ENCODE measurements at regions of chr2 and their contacts with region 1.

Region 1: DNA sequence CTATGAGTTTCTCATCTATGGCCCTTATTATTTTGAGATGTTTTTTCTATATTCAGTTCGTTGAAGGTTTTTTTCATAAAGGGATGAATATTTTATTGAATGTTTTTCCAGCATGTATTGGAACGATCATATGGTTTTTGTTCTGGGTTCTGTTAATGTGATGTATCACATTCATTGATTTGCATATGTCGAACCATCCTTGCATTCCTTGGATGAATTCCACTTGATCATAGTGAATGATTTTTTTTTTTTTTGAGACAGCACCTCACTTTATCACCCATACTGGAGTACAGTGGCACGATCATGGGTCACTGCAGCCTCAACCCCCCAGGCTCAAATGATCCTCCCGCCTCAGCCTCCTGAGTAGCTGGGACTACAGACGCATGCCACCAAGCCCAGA is 5.5 kb upstream of the NEMP2 start:
- DNase-seq: no peak
- H3K4me3 ChIP-seq: no peak overlapping the region
- H3K27ac ChIP-seq: no peak overlapping the region
- H3K4me1 ChIP-seq: peaks cover 0 to 22% (median 5%) of the 10 kb centered on the region in 4 donors
- H3K27me3 ChIP-seq: no peaks in the 10 kb centered on the region
- CTCF ChIP-seq: no peak

Region 2: GRCh38 chr2:189836657-189837056 is 703.4 kb before region 1 on chr2:
- intact Hi-C with region 1: no loop called
- DNase-seq: no peak
- H3K4me3 ChIP-seq: no peak overlapping the region
- H3K27ac ChIP-seq: no peak overlapping the region
- H3K4me1 ChIP-seq: peaks cover 0 to 16% (median 2%) of the 10 kb centered on the region in 4 donors
- H3K27me3 ChIP-seq: no peaks in the 10 kb centered on the region
- CTCF ChIP-seq: no peak

Region 3: DNA sequence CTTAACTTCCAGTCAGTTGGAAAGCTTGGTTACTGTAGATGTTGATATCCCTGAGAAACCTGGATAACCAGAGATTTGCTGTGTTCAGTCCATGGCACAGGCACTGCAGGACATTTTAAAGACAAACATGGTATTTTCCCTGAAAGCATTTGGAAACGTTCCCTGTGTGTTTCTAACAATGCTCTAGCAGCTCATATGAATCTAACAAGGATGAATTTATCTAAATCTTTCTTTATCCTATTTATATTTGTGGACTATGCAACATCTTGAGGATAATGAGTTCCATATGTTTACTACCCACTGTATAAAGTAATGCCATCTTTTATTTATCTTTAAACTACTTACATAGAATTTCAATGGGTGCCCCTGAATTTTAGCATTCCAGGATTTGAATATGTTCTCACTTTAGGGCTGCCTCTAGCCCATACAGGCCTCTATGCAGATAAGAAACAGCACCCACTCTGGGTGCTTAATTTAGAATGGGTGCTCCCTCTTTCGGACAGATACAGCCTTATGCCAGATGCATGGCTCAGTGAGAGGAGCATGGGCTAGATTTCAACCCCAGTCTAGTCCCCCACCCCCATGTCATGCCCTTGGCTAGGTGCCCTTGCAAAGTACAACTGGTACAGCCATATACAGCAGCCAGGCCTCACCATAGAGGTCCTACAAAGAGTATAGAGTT is 45.1 kb after region 1 on chr2:
- intact Hi-C with region 1: loop called (anchors 5 kb)
- DNase-seq: no peak
- H3K4me3 ChIP-seq: no peak overlapping the region
- H3K27ac ChIP-seq: no peak overlapping the region
- H3K4me1 ChIP-seq: peaks cover 0 to 19% (median 0%) of the 10 kb centered on the region in 4 donors
- H3K27me3 ChIP-seq: no peaks in the 10 kb centered on the region
- CTCF ChIP-seq: no peak

Region 4: DNA sequence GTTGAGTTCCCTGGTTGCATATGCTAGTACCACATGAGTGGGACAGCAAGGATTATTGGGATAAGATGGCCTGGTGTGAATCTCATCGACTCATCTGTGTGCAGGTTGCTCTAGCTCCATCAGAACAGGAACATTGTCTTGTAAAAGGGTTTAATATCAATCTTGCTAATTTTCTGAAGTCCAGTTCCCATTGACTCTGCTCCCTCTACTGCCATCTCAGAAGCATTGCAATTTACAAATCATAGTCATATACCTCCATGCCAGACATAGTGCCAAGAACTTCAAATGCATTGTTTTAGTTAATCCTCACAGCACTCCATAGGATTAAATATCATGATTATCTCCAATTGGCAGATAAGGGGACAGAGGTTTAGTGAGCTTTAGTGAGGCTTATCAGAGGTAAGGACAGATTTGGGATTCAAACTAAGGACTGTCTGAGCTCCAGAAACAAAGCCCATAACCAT is 615.6 kb after region 1 on chr2:
- intact Hi-C with region 1: no loop called
- DNase-seq: no peak
- H3K4me3 ChIP-seq: no peak overlapping the region
- H3K27ac ChIP-seq: no peak overlapping the region
- H3K4me1 ChIP-seq: peaks cover 0 to 10% (median 3%) of the 10 kb centered on the region in 4 donors
- H3K27me3 ChIP-seq: peaks cover 0 to 3% of the 10 kb centered on the region in 2 donors
- CTCF ChIP-seq: peak; percentile 21 to 33